BJ (cell line): ENCODE measurements at regions of chr15 and their contacts with region 1.

Region 1: GRCh38 chr15:89206908-89207331 is 14.5 kb downstream of the RLBP1 start:
- DNase-seq: no peak
- H3K4me3 ChIP-seq: no peak overlapping the region
- H3K27me3 ChIP-seq: 0 out of 2 replicates have a peak, but pooled peaks cover 1% of the 10 kb centered on the region
- CTCF ChIP-seq: peak; percentile 100

Region 2: DNA sequence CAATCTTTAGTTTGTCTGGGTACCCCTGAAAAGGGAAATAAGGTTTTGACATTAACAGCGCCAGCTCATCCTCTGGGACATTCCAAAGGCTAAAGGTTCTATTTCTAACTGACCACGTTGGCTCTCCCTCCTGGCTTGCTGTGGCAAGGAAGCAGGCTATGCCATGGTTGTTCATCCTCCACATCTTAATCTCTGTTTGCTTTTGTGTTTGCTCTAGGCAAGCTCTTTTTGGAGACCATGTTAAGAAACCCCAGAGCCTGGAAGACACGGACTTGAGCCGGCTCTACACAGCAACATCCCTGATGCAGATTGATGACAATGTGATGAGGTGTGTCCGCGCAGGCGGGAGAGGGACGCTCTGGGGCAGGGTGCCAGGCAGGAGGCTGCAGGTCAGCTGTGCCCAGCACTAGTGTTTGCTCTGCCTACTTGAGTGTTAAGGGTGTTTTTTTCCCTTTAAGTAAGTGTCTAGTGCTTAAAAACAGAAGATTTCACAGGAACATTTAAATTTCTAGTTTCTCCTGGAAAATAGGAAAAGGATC is 18.9 kb before region 1 on chr15:
- CTCF ChIA-PET with region 1: interaction called, 61 read pairs
- POLR2A ChIA-PET with region 1: no interaction called
- DNase-seq: no peak
- H3K4me3 ChIP-seq: no peak overlapping the region
- H3K27me3 ChIP-seq: no peaks in the 10 kb centered on the region
- CTCF ChIP-seq: no peak

Region 3: DNA sequence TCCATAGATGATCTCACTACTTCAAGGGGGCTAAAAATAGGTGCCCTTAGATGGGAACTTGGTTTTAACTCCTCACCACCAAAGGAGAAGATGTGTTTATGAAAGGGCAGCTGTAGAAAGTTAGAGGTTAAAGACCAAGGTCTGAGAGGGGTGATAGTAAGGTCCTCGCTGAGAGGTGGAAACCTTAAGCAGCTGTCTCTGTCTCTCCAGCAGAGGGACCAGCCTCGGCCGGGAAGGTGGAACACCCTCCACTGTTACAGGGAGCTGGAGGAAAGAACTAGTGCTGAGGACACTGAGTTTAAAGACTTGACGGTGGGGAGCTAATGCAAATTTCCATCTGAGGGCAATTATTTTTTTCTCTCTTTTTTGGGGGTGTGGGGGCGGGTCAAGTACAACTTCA is 23.4 kb after region 1 on chr15:
- CTCF ChIA-PET with region 1: interaction called, 11 read pairs
- POLR2A ChIA-PET with region 1: no interaction called
- DNase-seq: no peak
- H3K4me3 ChIP-seq: no peak overlapping the region
- H3K27me3 ChIP-seq: no peaks in the 10 kb centered on the region; the same call in 1 of the 2 replicates
- CTCF ChIP-seq: peak; percentile 38

Region 4: DNA sequence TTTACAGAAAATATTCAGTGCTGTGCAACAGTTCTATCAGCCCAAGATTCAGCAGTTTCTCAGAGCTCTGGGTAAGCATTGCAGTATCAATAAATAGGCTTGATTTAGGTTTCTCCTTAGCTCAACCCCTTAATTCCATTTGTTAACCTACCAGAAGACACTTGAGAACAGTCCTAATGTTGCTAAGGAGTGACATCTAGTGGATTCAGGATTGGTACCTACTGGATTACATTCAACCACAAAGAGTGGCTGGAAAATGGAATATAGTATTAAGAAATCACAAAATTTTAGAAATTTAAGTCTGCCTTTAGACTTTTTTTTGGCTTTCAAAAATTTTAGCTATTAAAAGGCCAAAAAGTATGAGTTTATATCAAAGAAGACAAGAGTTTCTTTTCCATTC is 93.0 kb after region 1 on chr15:
- CTCF ChIA-PET with region 1: interaction called, 45 read pairs
- POLR2A ChIA-PET with region 1: no interaction called
- DNase-seq: no peak
- H3K4me3 ChIP-seq: no peak overlapping the region
- H3K27me3 ChIP-seq: no peaks in the 10 kb centered on the region
- CTCF ChIP-seq: peak; percentile 41

Region 5: DNA sequence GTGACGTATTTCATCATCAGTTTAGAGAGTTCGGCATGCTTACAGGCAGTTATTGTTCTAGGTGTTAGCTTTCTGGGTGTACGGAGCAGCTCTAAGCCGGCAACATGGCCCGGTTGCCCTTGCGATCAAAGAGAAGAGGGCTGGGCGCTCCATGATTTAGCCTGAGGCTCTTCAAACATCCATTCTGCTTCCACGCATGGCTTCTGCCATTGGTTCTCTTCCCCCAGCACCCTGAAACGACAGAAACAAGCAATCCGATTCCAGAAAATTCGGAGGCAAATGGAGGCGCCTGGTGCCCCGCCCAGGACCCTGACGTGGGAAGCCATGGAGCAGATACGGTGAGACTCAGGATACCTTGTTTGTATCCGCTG is 1059.1 kb after region 1 on chr15:
- CTCF ChIA-PET with region 1: no interaction called
- POLR2A ChIA-PET with region 1: no interaction called
- DNase-seq: no peak
- H3K4me3 ChIP-seq: peak overlapping the region; percentile 74
- H3K27me3 ChIP-seq: no peaks in the 10 kb centered on the region
- CTCF ChIP-seq: no peak